ENCODE measurements at regions of chr1 and their contacts with region 1.

Region 1: DNA sequence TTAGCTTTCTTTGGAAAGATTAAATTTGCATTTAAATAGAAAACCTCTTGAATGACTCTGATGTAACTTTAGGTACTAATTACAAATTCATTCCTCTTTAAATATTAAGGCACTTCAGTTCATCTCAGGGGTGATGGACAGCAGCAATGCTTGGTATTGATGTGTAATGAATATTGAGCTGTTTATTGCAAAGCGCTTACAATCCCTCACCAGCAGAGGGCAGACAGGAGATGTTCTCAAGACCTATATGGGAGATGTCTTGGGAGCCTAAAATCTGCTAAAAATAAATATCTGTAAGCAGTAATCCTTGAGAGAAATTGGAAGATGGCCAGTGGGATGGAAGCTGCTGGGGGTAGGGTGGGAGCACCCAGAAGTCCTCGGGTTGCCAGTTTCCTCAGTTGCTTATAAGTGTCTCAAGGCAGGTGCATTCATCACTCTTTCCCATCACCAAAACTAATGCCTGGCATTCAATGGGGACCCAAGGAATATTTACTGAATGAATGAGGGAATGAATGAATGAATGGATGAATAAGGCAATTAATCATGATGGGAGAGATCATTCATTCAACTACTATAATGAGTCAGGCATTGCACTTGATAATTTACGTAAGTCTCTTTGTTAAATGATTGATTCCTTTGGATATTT is 2.3 kb downstream of the KLHDC8A start:
- DNase-seq: peak in 8 of 9 donors; percentile 24 to 67 (median 52)
- ATAC-seq: peak; percentile 82
- H3K4me3 ChIP-seq: no peak overlapping the region
- H3K4me3 Mint-ChIP-seq: no peak overlapping the region
- H3K27ac ChIP-seq: no peak overlapping the region
- H3K27ac Mint-ChIP-seq: peak overlapping the region in 1 of 9 donors; percentile 32
- H3K4me1 ChIP-seq: no peaks in the 10 kb centered on the region
- H3K4me1 Mint-ChIP-seq: peaks cover 0 to 4% (median 0%) of the 10 kb centered on the region in 7 donors
- H3K27me3 ChIP-seq: no peaks in the 10 kb centered on the region
- H3K27me3 Mint-ChIP-seq: peaks cover 16 to 37% (median 20%) of the 10 kb centered on the region in 5 donors

Region 2: DNA sequence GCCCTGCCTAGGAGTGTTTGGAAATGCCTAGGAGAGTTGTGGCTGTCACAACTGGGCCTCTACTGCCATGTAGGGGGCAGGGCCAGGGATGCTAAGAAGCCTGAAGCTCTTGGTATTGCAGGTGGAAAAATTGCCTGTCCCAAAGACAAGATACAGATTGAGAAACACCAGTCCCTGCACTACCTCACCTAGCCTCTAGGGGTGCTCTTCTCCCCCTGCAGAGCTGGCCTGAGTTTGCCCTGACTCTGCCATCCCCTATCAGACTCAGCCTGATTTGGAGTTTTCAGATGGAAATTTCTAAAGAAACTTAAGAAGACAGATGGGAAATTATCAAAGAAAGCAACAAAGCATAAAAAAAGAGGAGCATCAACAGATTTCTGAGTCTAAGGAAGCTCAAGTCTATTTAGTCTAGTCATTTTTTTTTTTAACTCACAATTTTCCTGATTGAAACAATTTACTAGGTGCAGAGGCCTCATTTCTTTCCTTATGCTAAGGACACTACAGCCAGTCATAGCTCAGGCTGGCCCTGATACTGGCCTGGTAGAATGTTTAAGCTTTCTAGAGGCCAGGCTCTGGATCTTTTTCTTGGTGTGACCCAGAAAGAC is 607.4 kb before region 1 on chr1:
- CTCF ChIA-PET with region 1: no interaction called
- POLR2A ChIA-PET with region 1: no interaction called
- intact Hi-C with region 1: no loop called
- DNase-seq: peak; percentile 16 to 60 (median 45)
- ATAC-seq: peak; percentile 85
- H3K4me3 ChIP-seq: no peak overlapping the region
- H3K4me3 Mint-ChIP-seq: no peak overlapping the region
- H3K27ac ChIP-seq: no peak overlapping the region
- H3K27ac Mint-ChIP-seq: no peak overlapping the region
- H3K4me1 ChIP-seq: no peaks in the 10 kb centered on the region
- H3K4me1 Mint-ChIP-seq: peaks cover 0 to 4% (median 0%) of the 10 kb centered on the region in 7 donors
- H3K27me3 ChIP-seq: peaks cover 0 to 3% of the 10 kb centered on the region in 2 donors
- H3K27me3 Mint-ChIP-seq: peaks cover 9 to 33% (median 20%) of the 10 kb centered on the region in 5 donors

Region 3: DNA sequence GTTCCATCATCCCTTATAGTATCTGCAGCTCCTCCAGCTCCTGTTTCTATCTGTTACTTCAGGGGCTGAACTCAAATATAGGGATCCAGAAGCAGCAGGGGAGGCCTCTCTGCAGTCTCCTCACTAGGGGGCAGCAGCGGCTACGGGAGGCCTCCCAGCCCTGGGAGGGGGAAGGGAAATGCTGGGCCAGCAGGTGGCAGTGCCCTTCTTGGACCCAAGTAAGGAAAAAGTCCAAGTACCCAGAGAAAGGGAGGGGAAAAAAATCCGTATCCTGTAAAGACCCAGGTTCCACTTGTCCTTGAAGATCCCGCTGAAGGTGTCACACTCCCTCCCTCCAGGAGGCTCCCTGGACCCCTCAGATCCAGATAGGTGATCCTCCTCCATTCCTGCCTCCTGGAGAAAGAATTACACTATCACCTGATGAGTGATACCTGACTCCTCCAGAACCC is 18.7 kb before region 1 on chr1:
- CTCF ChIA-PET with region 1: interaction called, 10 read pairs
- POLR2A ChIA-PET with region 1: no interaction called
- intact Hi-C with region 1: loop called in 1 of 2 experiments (anchors 1 kb)
- DNase-seq: peak; percentile 55 to 81 (median 71)
- ATAC-seq: peak; percentile 96
- H3K4me3 ChIP-seq: no peak overlapping the region
- H3K4me3 Mint-ChIP-seq: no peak overlapping the region
- H3K27ac ChIP-seq: no peak overlapping the region
- H3K27ac Mint-ChIP-seq: no peak overlapping the region
- H3K4me1 ChIP-seq: no peaks in the 10 kb centered on the region
- H3K4me1 Mint-ChIP-seq: peaks cover 0 to 5% (median 0%) of the 10 kb centered on the region in 7 donors
- H3K27me3 ChIP-seq: no peaks in the 10 kb centered on the region
- H3K27me3 Mint-ChIP-seq: peaks cover 0 to 40% (median 0%) of the 10 kb centered on the region in 5 donors

Region 4: DNA sequence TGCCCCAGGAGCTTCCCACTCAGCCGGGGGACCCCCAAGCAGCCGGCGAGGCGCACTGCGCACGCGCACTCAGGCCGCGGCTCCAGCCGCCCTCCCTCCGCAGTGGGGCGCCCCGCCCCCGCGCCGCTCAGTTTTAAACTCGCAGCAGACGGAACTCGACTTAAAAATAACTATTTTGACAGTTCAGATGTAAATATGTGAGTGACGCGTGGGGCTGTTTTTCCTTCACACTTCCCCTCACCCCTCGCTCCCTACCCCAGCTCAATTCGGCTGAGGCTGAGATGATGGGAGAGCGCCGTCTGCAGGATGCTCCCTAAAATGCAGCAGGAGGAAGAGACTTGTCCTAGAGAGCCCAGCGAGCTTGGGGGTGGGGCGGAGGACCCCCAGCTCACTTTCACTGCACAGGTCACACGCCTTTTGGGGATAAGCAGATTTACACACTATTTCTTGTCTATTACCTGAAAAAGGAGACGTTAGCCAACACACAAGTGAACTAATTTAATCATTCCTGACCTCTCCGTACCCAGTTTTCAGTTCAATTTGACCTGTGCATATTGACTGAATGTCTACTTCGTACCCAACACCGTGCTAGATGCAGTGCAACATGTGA is 76.4 kb after region 1 on chr1:
- CTCF ChIA-PET with region 1: interaction called, 12 read pairs
- POLR2A ChIA-PET with region 1: no interaction called
- intact Hi-C with region 1: loop called (anchors 1 to 2 kb)
- DNase-seq: peak; percentile 21 to 59 (median 51)
- ATAC-seq: peak; percentile 79
- H3K4me3 ChIP-seq: peak overlapping the region; percentile 44
- H3K4me3 Mint-ChIP-seq: peak overlapping the region; percentile 75 to 92 (median 86)
- H3K27ac ChIP-seq: no peak overlapping the region
- H3K27ac Mint-ChIP-seq: peak overlapping the region in 7 of 9 donors; percentile 52 to 88 (median 63)
- H3K4me1 ChIP-seq: peaks cover 0 to 6% of the 10 kb centered on the region in 2 donors
- H3K4me1 Mint-ChIP-seq: peaks cover 12 to 15% (median 15%) of the 10 kb centered on the region in 7 donors
- H3K27me3 ChIP-seq: no peaks in the 10 kb centered on the region
- H3K27me3 Mint-ChIP-seq: peaks cover 18 to 49% (median 22%) of the 10 kb centered on the region in 5 donors

Region 5: DNA sequence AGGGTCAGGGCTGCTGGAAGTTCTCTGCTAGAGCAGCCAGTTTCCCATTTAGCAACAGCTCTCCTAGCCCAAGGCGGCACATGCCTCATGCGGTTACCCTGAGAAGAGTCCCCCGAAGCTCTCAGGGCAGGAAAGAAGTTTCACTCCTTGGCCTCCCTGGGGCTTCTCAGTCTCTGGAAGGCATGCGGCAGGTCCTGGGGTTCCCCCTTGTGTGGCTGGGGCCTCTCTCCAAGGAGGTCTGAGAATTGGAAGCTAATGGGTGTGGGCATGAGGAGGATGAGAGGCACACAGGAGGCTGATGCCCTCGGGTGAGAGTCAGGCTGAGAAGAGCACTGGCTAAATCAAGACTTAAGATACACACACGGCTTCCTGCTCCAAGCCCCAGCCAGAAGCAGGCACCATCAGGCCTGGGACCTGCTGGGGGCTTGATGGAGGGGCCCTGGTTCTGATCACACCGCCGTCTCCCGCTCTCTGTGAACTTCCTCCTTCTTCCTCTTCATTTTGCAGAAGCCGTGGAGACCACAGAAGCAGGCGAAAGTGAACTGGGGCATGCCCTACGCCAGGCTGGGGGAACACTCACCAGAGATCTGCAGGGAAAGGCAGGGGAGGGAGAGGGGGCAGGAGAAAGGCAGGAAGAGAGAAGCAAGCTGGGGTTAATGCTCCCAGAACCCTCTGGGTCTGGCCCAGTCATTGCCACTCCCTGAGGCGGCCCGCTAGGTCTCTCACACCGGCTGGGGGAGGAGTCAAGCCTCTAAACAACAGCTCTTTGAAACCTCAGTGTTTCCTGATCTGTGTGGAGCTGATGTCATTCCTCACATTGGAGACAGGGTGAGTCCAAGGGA is 86.3 kb after region 1 on chr1:
- CTCF ChIA-PET with region 1: interaction called, 4 read pairs
- POLR2A ChIA-PET with region 1: interaction called, 3 read pairs
- intact Hi-C with region 1: loop called in 1 of 2 experiments (anchors 5 kb)
- DNase-seq: peak in 8 of 9 donors; percentile 30 to 64 (median 52)
- ATAC-seq: peak; percentile 90
- H3K4me3 ChIP-seq: peak overlapping the region; percentile 52
- H3K4me3 Mint-ChIP-seq: peak overlapping the region; percentile 79 to 90 (median 86)
- H3K27ac ChIP-seq: peak overlapping the region; percentile 48
- H3K27ac Mint-ChIP-seq: peak overlapping the region; percentile 69 to 94 (median 86)
- H3K4me1 ChIP-seq: peaks cover 17 to 34% of the 10 kb centered on the region in 2 donors
- H3K4me1 Mint-ChIP-seq: peaks cover 18 to 26% (median 23%) of the 10 kb centered on the region in 7 donors
- H3K27me3 ChIP-seq: no peaks in the 10 kb centered on the region
- H3K27me3 Mint-ChIP-seq: peaks cover 0 to 19% (median 7%) of the 10 kb centered on the region in 5 donors

Region 6: DNA sequence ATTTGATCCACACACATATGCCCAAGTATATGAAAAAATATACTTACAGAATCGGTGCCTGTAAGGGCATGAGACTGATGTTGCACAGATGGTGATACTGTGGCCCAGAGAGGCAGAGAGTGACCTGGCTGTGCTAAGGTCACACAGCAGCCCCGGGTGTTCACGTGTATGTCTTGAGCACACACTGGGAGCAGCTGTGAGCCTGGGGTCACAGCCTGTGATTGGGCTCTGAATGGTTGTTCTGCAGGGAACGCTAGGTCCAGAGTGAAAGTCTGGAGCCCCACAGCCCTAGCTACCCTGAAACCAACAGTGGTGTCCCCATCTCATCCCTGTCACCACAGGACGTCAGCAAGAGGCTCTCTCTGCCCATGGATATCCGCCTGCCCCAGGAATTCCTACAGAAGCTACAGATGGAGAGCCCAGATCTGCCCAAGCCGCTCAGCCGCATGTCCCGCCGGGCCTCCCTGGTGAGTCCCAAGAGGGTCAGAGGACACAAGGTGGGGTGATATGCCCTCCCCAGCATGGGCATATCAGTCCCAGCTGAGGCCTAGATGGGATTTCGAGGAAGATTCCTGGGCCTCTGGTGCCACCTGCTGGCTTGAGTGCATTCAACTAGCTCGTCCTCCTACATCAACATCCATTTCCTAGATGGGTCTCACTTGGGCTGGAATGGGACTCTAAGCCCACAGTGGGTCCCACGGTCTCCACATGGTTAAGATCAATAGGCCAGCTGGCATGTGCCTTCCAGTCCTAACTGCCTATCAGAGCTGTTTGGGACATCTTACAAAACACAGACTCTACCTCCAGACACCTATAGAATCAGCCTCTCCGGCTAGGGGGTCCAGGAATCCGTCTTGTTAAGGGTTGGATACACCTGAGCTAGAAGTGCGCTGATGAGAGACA is 169.8 kb after region 1 on chr1:
- CTCF ChIA-PET with region 1: interaction called, 43 read pairs
- POLR2A ChIA-PET with region 1: no interaction called
- intact Hi-C with region 1: loop called in 1 of 2 experiments (anchors 1 kb)
- DNase-seq: peak; percentile 42 to 69 (median 62)
- ATAC-seq: peak; percentile 60
- H3K4me3 ChIP-seq: no peak overlapping the region
- H3K4me3 Mint-ChIP-seq: no peak overlapping the region
- H3K27ac ChIP-seq: no peak overlapping the region
- H3K27ac Mint-ChIP-seq: no peak overlapping the region
- H3K4me1 ChIP-seq: no peaks in the 10 kb centered on the region
- H3K4me1 Mint-ChIP-seq: peaks cover 0 to 3% (median 0%) of the 10 kb centered on the region in 7 donors
- H3K27me3 ChIP-seq: no peaks in the 10 kb centered on the region
- H3K27me3 Mint-ChIP-seq: peaks cover 0 to 4% (median 0%) of the 10 kb centered on the region in 5 donors